Cardiac septum (tissue), 1 donor: ENCODE measurements at regions of chr17 and their contacts with region 1.

Region 1: GRCh38 chr17:20091174-20092029 is 82.2 kb downstream of the SPECC1 start:
- DNase-seq: no peak

Region 2: DNA sequence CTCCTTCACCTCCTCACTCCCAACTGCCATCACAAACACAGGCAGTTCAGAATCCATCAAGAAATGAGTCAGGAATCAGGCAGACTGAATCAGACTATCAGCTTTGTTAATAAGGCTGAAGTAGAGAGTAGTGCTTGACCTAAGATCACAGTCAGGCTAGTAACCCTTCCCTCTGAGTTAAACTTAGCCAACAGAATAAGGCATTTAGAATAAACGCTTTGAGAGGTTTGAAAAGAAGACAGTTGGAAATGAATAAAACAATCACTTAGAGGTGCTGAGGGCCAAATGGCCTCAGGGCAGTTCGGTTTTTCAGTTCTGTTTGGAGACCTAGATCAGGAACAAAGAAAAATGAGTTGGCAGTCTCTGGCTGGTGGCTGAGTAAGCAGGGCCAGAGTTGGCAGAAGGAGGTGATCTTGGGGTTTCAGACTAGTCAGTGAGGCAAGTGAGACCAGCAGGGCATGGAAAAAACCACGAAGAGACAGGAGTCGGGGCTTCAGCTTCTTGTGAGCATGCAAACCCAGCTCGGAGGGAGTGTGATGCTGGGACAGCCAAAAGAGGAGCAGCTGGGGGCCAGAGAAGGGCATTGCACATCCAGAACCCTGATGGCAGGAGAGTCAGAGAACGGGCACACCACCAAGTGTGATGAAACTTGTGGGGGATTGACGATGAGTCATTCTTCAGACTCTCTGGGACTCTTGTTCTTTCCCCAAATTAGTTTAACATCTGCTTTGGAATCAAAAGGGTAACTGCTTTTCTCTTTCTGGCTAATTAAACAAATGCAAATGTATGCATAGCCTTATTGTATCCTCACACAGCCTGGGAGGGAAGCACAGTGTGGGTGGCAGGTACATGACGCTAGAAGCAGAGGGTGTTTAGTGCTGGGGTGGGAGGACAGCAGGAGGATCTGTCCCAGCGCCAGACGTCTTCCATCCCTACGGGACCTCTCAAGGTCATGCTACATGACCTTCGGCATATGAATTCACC is 27.4 kb before region 1 on chr17:
- intact Hi-C with region 1: loop called (anchors 1 kb)
- DNase-seq: no peak

Region 3: DNA sequence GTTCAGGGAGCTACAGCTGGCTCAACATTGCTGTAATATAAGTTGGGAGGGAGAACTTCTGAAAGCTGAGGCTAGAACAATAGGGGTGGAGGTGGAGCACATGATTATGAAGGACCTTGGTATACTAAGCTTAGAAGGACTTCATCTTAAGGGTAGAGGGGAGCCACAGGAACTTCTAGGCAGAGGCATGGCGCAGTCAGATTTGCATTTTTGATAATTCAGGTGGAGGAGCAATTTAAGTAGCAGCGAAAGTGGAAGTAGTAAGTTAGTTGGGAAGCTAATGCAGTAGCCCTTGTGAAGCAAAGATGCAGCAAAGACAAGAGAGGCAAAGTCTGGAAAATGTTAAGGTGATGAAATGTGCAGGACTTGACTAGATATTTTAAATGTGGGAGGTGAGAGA is 61.8 kb after region 1 on chr17:
- intact Hi-C with region 1: no loop called
- DNase-seq: no peak